Colonic mucosa (tissue), 4 donors: ENCODE measurements at regions of chr10 and their contacts with region 1.

Region 1: GRCh38 chr10:102009801-102010425 is 46.1 kb downstream of the ARMH3 start:
- DNase-seq: peak; percentile 49
- H3K4me3 ChIP-seq: no peak overlapping the region
- H3K27ac ChIP-seq: no peak overlapping the region
- H3K4me1 ChIP-seq: no peaks in the 10 kb centered on the region
- H3K27me3 ChIP-seq: no peaks in the 10 kb centered on the region
- CTCF ChIP-seq: peak; percentile 86

Region 2: DNA sequence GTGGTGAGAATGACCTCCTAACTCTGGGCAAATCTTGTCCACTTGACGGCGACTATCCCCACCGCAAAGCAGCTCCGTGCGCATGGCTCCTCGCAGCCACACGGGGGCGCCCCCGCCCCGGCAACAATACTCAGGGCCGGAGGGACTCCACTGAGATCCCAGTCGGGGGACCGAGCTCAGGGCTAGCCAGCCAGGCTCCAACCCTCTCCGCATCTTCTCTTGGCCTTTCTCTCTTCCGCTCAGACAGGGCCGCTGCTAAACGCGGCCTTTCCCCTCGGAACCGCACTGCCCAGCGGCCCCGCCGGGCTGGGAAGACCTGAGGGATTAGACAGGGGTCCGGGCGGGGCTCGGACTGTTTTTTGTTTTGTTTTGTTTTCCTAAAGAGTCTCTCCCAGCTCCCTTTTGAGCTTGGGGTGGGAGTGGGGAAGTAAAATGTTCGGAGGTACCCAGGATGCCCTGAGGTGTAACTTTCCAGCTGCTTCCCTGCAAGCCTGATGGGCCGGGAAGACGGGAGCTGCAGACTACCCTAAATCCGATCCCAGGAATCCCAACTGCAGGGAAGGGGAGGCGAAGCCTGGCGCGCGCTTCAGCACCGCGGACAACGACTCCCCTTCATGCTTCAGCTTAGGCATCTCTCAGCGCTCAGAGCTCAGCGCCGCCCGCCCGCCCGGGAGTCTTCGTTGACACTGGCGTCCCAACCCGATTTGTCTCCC is 169.0 kb before region 1 on chr10:
- intact Hi-C with region 1: loop called (anchors 2 kb)
- DNase-seq: peak; percentile 81
- H3K4me3 ChIP-seq: peak overlapping the region; percentile 24
- H3K27ac ChIP-seq: no peak overlapping the region
- H3K4me1 ChIP-seq: peaks cover 10% of the 10 kb centered on the region
- H3K27me3 ChIP-seq: no peaks in the 10 kb centered on the region
- CTCF ChIP-seq: peak; percentile 96

Region 3: DNA sequence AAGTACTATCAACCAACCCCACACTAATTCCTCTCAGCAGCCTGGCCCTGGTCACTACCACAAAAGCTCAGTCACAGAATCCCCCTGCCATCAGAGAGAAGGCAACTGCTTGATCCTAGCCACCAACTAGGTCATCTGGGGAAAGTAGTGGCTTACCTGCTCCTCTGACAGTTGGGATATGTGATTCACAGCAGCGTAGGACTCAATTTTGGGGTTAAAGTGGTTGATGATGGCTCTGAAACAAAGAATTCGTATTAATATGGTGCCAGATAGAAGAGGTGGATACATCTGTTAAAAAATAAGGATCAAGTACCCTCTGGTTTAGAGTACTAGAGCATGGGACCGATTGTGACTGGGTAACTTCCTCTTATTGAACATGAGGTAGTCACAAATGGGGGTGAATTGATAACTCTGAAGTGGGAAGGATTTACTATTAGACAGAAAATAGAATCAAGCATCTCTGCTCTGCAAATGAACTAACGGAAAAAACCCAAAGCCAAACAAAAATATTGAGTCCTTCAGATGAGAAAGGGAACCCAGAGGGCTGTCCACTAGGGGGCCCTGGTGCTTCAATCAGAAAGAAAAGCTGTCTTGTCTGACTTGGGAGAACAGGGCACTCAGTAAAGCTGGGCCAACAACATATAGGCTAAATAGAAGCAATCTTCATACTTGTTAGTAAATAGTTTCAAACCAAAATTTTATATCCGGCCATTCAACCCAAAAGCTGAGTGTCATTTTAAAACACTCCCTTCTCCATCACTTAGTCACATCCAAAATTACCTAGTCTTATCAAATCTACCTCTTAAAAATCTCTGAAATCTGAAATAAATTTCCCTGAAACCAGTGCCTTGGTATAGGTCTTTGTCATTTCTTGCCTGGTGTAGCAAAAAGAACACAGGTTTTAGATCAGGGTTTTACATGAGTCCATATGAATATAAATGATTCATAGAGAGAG is 120.4 kb before region 1 on chr10:
- intact Hi-C with region 1: loop called (anchors 2 kb)
- DNase-seq: peak; percentile 77
- H3K4me3 ChIP-seq: no peak overlapping the region
- H3K27ac ChIP-seq: no peak overlapping the region
- H3K4me1 ChIP-seq: no peaks in the 10 kb centered on the region
- H3K27me3 ChIP-seq: no peaks in the 10 kb centered on the region
- CTCF ChIP-seq: peak; percentile 77